B cell (primary cell): ENCODE measurements at regions of chr1 and their contacts with region 1.

Region 1: GRCh38 chr1:234373064-234373958 is at the start of gene COA6:
- DNase-seq: peak; percentile 99
- ATAC-seq: peak; percentile 85
- H3K4me3 ChIP-seq: peak within 1 kb of the TSS; percentile 60 to 96 (median 86)
- H3K4me3 Mint-ChIP-seq: peak within 1 kb of the TSS; percentile 100
- H3K27ac ChIP-seq: peak within 1 kb of the TSS; percentile 91 to 96
- H3K27ac Mint-ChIP-seq: peak within 1 kb of the TSS; percentile 100
- H3K4me1 ChIP-seq: peaks cover 13 to 16% of the 10 kb centered on the region in 2 donors
- H3K4me1 Mint-ChIP-seq: peaks cover 33% of the 10 kb centered on the region
- H3K27me3 ChIP-seq: no peaks in the 10 kb centered on the region
- H3K27me3 Mint-ChIP-seq: no peaks in the 10 kb centered on the region
- CTCF ChIP-seq: no peak
- total RNA-seq, gene COA6: 12.5 and 14.8 TPM in 2 replicates

Region 2: GRCh38 chr1:234326497-234327366 is 46.6 kb before region 1 on chr1:
- CTCF ChIA-PET with region 1: interaction called, 5 read pairs
- POLR2A ChIA-PET with region 1: interaction called, 3 read pairs
- intact Hi-C with region 1: loop called (anchors 1 kb)
- DNase-seq: peak; percentile 72
- ATAC-seq: peak; percentile 78
- H3K4me3 ChIP-seq: peak overlapping the region; percentile 30 to 68 (median 56)
- H3K4me3 Mint-ChIP-seq: peak overlapping the region; percentile 61
- H3K27ac ChIP-seq: no peak overlapping the region
- H3K27ac Mint-ChIP-seq: no peak overlapping the region
- H3K4me1 ChIP-seq: peaks cover 0 to 26% of the 10 kb centered on the region in 2 donors
- H3K4me1 Mint-ChIP-seq: peaks cover 25% of the 10 kb centered on the region
- H3K27me3 ChIP-seq: peaks cover 0 to 25% (median 2%) of the 10 kb centered on the region in 4 experiments
- H3K27me3 Mint-ChIP-seq: peaks cover 31% of the 10 kb centered on the region
- CTCF ChIP-seq: peak; percentile 81

Region 3: DNA sequence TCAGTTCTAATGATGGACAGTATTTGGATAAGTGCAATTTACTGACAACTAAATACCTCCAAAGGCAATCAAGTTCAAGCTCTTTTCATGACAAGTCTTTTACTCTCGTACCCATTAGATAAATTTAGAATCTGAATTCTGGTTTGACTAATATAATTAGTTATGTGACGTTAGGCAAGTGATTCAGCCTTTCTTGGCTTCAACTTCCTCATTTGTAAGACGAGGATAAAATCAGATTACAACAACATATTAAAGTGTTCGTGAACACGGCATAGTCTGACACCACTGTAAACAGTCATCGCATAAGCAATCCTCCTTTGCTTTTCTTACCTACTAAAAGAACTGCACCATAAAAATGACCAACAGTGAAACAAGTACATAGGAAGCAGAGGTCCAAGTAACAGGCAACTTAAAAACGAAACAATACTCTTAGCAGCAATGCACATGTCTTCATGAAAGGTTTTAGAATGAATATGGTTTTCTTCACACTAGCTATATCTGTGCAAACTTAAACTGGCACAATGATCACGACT is 25.6 kb after region 1 on chr1:
- CTCF ChIA-PET with region 1: interaction called, 6 read pairs
- POLR2A ChIA-PET with region 1: interaction called, 6 read pairs
- intact Hi-C with region 1: loop called (anchors 2 kb)
- DNase-seq: peak; percentile 67
- ATAC-seq: peak; percentile 72
- H3K4me3 ChIP-seq: peak overlapping the region; percentile 37 to 83 (median 52)
- H3K4me3 Mint-ChIP-seq: peak overlapping the region; percentile 99
- H3K27ac ChIP-seq: peak overlapping the region; percentile 66 to 80
- H3K27ac Mint-ChIP-seq: peak overlapping the region; percentile 94
- H3K4me1 ChIP-seq: peaks cover 18 to 20% of the 10 kb centered on the region in 2 donors
- H3K4me1 Mint-ChIP-seq: peaks cover 36% of the 10 kb centered on the region
- H3K27me3 ChIP-seq: no peaks in the 10 kb centered on the region
- H3K27me3 Mint-ChIP-seq: no peaks in the 10 kb centered on the region
- CTCF ChIP-seq: no peak

Region 4: GRCh38 chr1:234468580-234469344 is 95.5 kb after region 1 on chr1:
- CTCF ChIA-PET with region 1: no interaction called
- POLR2A ChIA-PET with region 1: no interaction called
- intact Hi-C with region 1: no loop called
- DNase-seq: no peak
- ATAC-seq: no peak
- H3K4me3 ChIP-seq: no peak overlapping the region
- H3K4me3 Mint-ChIP-seq: no peak overlapping the region
- H3K27ac ChIP-seq: no peak overlapping the region
- H3K27ac Mint-ChIP-seq: no peak overlapping the region
- H3K4me1 ChIP-seq: peaks cover 8 to 12% of the 10 kb centered on the region in 2 donors
- H3K4me1 Mint-ChIP-seq: peaks cover 10% of the 10 kb centered on the region
- H3K27me3 ChIP-seq: no peaks in the 10 kb centered on the region
- H3K27me3 Mint-ChIP-seq: no peaks in the 10 kb centered on the region
- CTCF ChIP-seq: no peak

Region 5: DNA sequence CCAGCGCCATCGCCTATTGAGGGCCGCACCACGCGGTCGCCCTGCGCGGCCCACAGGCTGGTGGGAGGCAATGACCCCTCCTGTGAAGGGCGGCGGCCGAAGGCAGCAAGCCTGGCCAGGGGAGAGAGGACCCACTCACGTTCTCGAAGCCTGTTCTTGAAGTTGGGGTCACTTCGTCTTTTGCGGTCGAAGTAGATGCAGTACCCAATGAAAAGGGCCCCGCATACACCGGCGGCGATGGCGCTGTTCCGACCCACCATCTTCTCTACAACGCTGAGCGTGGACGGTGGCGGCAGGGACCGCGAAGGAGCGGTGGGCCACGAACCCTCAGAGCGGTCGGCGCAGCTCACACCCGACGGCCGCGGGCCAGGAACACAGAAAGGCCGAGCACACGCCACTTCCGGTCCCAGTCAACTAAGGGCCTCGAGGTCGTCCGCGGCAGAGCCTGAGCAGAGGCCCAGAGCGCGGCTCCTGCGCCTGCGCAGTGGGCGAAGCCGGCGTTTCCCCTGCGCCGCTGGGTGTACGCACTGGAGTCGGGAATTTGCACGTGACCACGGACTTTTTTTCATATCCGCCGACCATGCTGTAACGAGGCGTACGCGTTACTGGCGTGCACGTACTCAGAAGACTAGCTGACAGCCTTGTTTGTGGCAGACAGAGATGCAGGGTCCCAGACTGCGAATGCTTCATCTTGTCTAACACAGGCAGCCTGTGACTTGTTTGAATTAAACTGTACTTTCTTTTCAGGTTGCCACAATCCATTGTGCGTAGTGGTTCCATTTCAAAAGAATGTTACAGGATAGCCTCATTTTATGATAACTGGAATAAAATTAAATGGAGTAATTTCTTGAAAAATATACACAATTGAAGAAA is 755.4 kb after region 1 on chr1 and contains the start of gene TOMM20:
- CTCF ChIA-PET with region 1: no interaction called
- POLR2A ChIA-PET with region 1: no interaction called
- intact Hi-C with region 1: loop called (anchors 2 kb)
- DNase-seq: peak; percentile 97
- ATAC-seq: peak; percentile 93
- H3K4me3 ChIP-seq: peak within 1 kb of the TSS; percentile 72 to 99 (median 89)
- H3K4me3 Mint-ChIP-seq: peak within 1 kb of the TSS; percentile 97
- H3K27ac ChIP-seq: peak within 1 kb of the TSS; percentile 84 to 95
- H3K27ac Mint-ChIP-seq: peak within 1 kb of the TSS; percentile 99
- H3K4me1 ChIP-seq: peaks cover 16 to 20% of the 10 kb centered on the region in 2 donors
- H3K4me1 Mint-ChIP-seq: peaks cover 35% of the 10 kb centered on the region
- H3K27me3 ChIP-seq: no peaks in the 10 kb centered on the region
- H3K27me3 Mint-ChIP-seq: no peaks in the 10 kb centered on the region
- CTCF ChIP-seq: no peak
- total RNA-seq, gene TOMM20: 73.5 and 77.3 TPM in 2 replicates

Region 6: GRCh38 chr1:235328357-235329138 is 955.2 kb after region 1 on chr1 and contains the start of gene GGPS1:
- CTCF ChIA-PET with region 1: no interaction called
- POLR2A ChIA-PET with region 1: no interaction called
- intact Hi-C with region 1: loop called (anchors 1 kb)
- DNase-seq: peak; percentile 98
- ATAC-seq: peak; percentile 75
- H3K4me3 ChIP-seq: peak within 1 kb of the TSS; percentile 89 to 99 (median 99)
- H3K4me3 Mint-ChIP-seq: no peak within 1 kb of the TSS
- H3K27ac ChIP-seq: peak within 1 kb of the TSS; percentile 89 to 98
- H3K27ac Mint-ChIP-seq: no peak within 1 kb of the TSS
- H3K4me1 ChIP-seq: peaks cover 33 to 58% of the 10 kb centered on the region in 2 donors
- H3K4me1 Mint-ChIP-seq: peaks cover 53% of the 10 kb centered on the region
- H3K27me3 ChIP-seq: no peaks in the 10 kb centered on the region
- H3K27me3 Mint-ChIP-seq: no peaks in the 10 kb centered on the region
- CTCF ChIP-seq: peak; percentile 36
- total RNA-seq, gene GGPS1: 43.6 and 46.8 TPM in 2 replicates